ENCODE measurements at regions of chr10 and their contacts with region 1.

Region 1: DNA sequence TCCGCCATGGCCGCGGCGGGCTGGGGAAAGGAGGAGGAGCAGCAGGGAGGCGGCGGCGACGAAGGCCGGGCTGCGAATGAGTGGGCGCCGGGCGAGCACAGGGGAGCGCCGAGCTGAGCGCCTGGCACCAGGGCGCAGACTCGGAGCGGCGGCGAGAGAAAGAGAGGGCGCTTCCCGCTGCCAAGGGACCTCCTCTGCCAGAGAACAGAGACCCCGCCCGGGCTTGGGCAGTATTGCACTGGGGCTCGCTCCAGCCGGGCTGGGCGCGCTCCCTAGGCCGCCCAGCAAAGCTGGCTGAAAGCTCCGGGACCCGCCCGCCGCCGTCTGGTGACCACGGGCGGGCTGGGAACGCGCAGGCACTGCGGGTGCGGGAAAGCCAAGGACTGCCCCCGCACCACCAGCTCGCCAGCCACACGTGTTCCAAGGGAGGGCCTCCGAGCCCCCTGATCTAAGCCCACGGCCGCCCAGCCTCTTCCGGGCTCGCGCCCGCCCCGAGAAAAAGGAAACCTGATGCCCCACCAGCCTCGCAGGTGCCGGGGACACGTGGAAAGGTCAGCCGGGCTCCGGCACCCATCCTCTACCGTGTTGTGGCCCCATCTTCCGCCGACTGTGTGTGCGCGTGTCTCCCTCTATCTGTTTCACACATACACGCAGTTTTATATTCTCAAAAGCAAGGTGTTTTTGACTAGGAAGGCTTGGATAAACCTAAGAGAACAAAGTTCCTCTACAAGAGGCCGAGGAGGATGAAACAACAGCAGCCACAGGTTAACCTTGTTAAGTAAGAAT is at the start of gene CCDC6:
- DNase-seq: peak; percentile 93
- H3K4me3 Mint-ChIP-seq: peak within 1 kb of the TSS; percentile 95
- H3K27ac Mint-ChIP-seq: peak within 1 kb of the TSS; percentile 98
- H3K4me1 Mint-ChIP-seq: peaks cover 53% of the 10 kb centered on the region
- H3K27me3 Mint-ChIP-seq: no peaks in the 10 kb centered on the region
- total RNA-seq, gene CCDC6: 43.1 to 44.9 TPM

Region 2: GRCh38 chr10:59625721-59626522 is 280.7 kb before region 1 on chr10:
- CTCF ChIA-PET with region 1: interaction called, 5 read pairs
- intact Hi-C with region 1: loop called (anchors 1 kb)
- DNase-seq: peak; percentile 59
- H3K4me3 Mint-ChIP-seq: no peak overlapping the region
- H3K27ac Mint-ChIP-seq: no peak overlapping the region
- H3K4me1 Mint-ChIP-seq: peaks cover 3% of the 10 kb centered on the region
- H3K27me3 Mint-ChIP-seq: peaks cover 2% of the 10 kb centered on the region

Region 3: DNA sequence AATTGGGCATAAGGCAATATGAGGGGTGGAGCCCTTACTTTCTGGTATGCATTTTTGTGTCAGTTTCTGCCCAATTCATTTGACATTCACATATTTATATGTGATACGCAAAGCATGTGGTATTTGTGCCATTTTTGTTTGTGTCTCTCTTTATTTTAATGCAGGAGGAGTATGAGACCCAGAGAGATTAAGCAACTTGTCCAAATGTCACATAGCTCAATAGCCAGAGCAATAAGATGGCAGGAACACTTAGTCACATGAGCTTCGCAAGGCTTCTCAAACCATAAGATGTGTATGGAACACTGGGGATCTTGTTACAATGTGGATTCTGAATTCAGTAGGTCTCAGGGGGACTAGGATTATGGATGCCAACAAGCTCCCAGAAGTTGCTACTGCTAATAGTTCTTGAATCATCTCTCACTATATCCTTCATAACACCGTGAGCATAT is 172.6 kb before region 1 on chr10:
- CTCF ChIA-PET with region 1: no interaction called
- intact Hi-C with region 1: no loop called
- DNase-seq: no peak
- H3K4me3 Mint-ChIP-seq: no peak overlapping the region
- H3K27ac Mint-ChIP-seq: no peak overlapping the region
- H3K4me1 Mint-ChIP-seq: no peaks in the 10 kb centered on the region
- H3K27me3 Mint-ChIP-seq: peaks cover 8% of the 10 kb centered on the region

Region 4: DNA sequence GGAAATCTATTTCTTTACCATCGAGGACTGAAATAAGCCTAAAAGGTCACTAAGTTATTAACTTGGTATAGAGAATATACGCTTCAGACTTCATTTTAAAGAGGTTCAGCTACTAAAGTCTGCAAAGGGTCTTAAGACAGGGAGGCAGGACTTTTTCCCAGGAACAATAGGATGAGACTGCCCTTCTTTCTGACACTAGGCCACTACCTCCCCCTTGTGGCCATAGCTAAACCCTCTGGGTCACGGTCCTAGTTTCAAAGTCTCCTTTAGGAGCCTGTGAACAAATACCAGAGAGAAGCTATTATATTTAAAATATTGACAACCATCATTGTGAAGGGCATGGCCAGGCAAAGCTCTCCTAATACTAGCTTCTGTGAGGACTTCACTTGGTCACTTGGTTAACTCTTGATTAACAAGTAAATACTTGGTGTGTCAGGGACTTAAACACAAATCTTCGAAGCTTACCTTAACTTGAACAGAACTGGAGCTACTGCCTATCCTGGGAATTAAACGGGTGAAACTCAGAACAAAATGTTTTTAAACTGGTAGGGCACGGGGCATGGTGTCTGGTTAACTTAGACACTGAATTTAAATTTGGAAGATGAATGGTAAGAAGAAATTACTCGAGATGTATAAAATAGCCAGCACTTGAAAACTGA is 75.9 kb before region 1 on chr10:
- CTCF ChIA-PET with region 1: interaction called, 28 read pairs
- intact Hi-C with region 1: loop called (anchors 2 kb)
- DNase-seq: peak; percentile 33
- H3K4me3 Mint-ChIP-seq: no peak overlapping the region
- H3K27ac Mint-ChIP-seq: no peak overlapping the region
- H3K4me1 Mint-ChIP-seq: peaks cover 41% of the 10 kb centered on the region
- H3K27me3 Mint-ChIP-seq: no peaks in the 10 kb centered on the region

Region 5: GRCh38 chr10:59879361-59879913 is 27.2 kb before region 1 on chr10:
- CTCF ChIA-PET with region 1: interaction called, 21 read pairs
- intact Hi-C with region 1: loop called (anchors 1 kb)
- DNase-seq: no peak
- H3K4me3 Mint-ChIP-seq: peak overlapping the region; percentile 3
- H3K27ac Mint-ChIP-seq: peak overlapping the region; percentile 86
- H3K4me1 Mint-ChIP-seq: peaks cover 87% of the 10 kb centered on the region
- H3K27me3 Mint-ChIP-seq: no peaks in the 10 kb centered on the region

Region 6: GRCh38 chr10:60032723-60033122 is 126.1 kb after region 1 on chr10:
- CTCF ChIA-PET with region 1: no interaction called
- intact Hi-C with region 1: loop called (anchors 1 kb)
- DNase-seq: peak; percentile 79
- H3K4me3 Mint-ChIP-seq: no peak overlapping the region
- H3K27ac Mint-ChIP-seq: no peak overlapping the region
- H3K4me1 Mint-ChIP-seq: no peaks in the 10 kb centered on the region
- H3K27me3 Mint-ChIP-seq: no peaks in the 10 kb centered on the region

Region 7: DNA sequence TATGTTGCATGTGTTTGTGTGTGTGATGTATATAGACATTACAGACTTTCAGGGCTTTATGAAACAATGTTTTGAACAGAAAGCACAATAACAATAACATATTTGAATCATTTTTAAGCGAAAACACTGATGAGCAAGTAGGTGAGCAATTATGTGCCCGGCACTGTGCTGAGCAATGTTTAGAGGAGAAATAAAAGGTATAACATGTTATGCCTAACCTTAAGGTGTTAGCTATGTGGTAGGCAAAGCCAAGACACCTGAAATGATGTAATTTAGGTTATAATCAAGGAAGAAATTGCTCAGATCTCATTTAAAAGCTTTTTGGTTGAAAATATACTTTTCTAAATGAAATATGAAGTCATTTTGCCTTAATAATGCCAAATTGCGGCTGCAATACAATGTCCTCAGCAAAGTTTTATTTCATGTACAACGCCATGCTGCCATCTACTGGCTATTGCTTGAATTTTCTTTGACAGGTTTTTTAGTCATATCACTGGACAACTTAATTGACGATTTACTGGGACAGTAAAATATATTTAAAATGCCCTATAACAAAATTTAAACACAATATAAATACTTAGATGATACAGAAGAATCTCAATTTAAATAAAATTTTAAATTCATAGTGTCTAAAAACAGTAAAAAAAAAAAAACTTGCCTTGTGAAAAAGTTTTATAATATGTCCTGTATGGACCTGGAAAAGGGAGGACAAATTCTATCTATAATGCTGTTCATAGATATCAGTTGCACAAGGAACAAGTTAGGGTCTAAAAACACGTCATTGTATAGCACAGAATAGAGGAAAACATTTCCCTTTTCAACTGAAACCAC is 740.6 kb after region 1 on chr10:
- CTCF ChIA-PET with region 1: no interaction called
- intact Hi-C with region 1: loop called (anchors 5 kb)
- DNase-seq: peak; percentile 71
- H3K4me3 Mint-ChIP-seq: no peak overlapping the region
- H3K27ac Mint-ChIP-seq: no peak overlapping the region
- H3K4me1 Mint-ChIP-seq: peaks cover 10% of the 10 kb centered on the region
- H3K27me3 Mint-ChIP-seq: no peaks in the 10 kb centered on the region

Region 8: DNA sequence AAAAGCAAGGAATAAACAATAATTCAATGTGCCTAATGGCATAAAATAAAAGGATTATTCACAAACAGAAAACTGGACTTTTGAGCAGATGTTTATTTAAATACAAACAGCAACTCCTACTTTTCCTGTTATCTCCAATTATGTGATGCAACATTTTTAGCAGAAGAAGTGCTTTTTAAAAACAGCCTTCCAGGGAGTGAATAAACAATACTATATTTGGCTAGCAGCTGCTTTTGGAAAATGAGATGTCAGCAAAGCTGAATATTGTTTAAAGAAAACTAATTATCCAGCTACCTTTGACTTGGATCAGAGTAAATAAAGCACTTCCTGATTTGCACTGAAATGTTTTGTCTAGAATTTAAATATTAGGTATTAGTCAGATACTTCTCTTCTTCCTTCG is 894.9 kb after region 1 on chr10:
- CTCF ChIA-PET with region 1: no interaction called
- intact Hi-C with region 1: no loop called
- DNase-seq: no peak
- H3K4me3 Mint-ChIP-seq: no peak overlapping the region
- H3K27ac Mint-ChIP-seq: no peak overlapping the region
- H3K4me1 Mint-ChIP-seq: no peaks in the 10 kb centered on the region
- H3K27me3 Mint-ChIP-seq: no peaks in the 10 kb centered on the region

Region 9: DNA sequence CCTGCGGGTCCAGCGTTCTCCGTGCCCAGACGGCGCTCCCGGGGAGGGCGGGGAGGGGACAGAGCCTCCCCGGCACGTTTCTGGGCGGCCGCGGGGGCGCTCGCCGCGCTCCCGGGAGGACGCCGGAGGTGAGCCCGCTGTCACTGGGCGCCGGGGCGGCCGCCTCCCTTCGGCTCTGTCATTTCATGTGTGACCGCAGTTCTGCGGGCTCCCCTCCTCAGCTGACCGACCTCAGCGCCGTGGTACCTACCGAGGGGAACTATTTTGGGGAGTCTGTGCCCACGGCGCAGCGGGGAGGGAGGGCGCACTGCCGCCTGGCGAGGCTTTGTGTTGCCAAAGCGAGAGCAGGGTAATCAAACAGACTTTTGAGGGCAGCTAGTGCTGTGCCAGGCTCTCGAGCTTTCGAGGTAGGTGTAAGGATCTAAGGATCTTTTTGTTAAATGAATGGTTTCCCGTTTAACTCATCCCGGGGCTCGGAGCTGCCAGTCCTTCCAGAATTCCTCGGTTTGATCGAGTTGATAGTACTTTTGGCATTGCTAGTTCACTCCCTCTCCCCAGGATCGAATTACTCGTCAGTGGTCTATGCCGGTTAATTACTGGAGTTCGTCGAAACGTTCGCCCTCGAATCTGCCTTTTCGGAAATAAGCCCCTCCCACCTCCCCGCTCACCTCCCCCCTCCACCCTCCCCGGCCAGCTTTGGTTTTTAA is 1996.8 kb after region 1 on chr10:
- CTCF ChIA-PET with region 1: no interaction called
- intact Hi-C with region 1: loop called (anchors 5 kb)
- DNase-seq: peak; percentile 74
- H3K4me3 Mint-ChIP-seq: peak overlapping the region; percentile 99
- H3K27ac Mint-ChIP-seq: peak overlapping the region; percentile 100
- H3K4me1 Mint-ChIP-seq: peaks cover 42% of the 10 kb centered on the region
- H3K27me3 Mint-ChIP-seq: no peaks in the 10 kb centered on the region